ENCODE measurements at regions of chr13 and their contacts with region 1.

Region 1: DNA sequence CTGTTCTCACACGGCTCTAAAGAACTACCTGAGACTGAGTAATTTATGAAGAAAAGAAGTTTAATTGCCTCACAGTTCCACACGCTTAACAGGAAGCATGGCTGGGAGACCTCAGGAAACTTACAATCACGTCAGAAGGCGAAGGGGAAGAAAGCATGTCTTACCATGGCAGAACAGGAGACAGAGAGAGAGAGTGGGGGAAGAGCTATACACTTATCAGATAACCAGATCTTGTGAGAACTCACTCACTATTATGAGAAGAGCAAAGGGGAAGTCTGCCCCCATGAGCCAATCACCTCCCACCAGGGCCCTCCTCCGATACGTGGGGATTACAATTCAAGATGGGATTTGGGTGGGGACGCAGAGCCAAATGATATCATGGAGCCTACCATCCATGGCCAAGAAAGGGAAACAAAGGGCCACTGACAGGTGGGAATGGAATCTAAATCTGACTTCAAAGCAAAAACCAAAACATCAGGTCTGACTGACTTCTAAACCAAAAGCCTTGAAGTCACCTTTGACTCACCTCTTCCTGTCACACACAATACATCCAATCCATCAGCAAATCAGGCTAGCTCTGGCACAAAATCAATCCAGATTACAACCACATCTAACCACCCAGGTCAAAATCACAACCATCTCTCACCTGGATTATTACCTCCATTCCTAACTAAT is 189.7 kb downstream of the ENOX1 start:
- DNase-seq: peak; percentile 20
- ATAC-seq: peak; percentile 90
- H3K4me3 Mint-ChIP-seq: no peak overlapping the region
- H3K27ac Mint-ChIP-seq: peak overlapping the region; percentile 65
- H3K4me1 Mint-ChIP-seq: peaks cover 18% of the 10 kb centered on the region
- H3K27me3 Mint-ChIP-seq: peaks cover 4% of the 10 kb centered on the region

Region 2: DNA sequence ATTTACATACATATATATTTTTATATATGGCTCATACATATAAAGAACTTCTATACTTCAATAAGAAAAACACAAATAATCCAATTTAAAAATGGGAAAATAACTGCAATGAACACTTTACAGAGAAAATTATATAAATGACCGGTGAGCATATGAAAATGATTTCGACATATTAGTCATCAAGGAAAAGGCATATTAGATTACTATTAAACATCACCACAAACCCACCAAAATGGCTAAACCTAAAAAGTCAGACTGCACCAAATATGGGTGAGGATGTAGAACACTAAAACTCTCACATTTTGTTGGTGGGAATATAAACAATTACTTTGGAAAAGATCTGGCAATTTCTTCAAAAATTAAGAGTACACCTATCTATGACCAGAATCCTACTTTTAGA is 126.5 kb before region 1 on chr13:
- CTCF ChIA-PET with region 1: no interaction called
- POLR2A ChIA-PET with region 1: no interaction called
- intact Hi-C with region 1: no loop called
- DNase-seq: no peak
- ATAC-seq: no peak
- H3K4me3 Mint-ChIP-seq: no peak overlapping the region
- H3K27ac Mint-ChIP-seq: no peak overlapping the region
- H3K4me1 Mint-ChIP-seq: no peaks in the 10 kb centered on the region
- H3K27me3 Mint-ChIP-seq: peaks cover 9% of the 10 kb centered on the region

Region 3: GRCh38 chr13:43694146-43694664 is 97.1 kb after region 1 on chr13:
- CTCF ChIA-PET with region 1: interaction called, 3 read pairs
- POLR2A ChIA-PET with region 1: no interaction called
- intact Hi-C with region 1: loop called in 1 of 2 experiments (anchors 5 kb)
- DNase-seq: no peak
- ATAC-seq: peak; percentile 16
- H3K4me3 Mint-ChIP-seq: no peak overlapping the region
- H3K27ac Mint-ChIP-seq: no peak overlapping the region
- H3K4me1 Mint-ChIP-seq: peaks cover 4% of the 10 kb centered on the region
- H3K27me3 Mint-ChIP-seq: peaks cover 21% of the 10 kb centered on the region

Region 4: DNA sequence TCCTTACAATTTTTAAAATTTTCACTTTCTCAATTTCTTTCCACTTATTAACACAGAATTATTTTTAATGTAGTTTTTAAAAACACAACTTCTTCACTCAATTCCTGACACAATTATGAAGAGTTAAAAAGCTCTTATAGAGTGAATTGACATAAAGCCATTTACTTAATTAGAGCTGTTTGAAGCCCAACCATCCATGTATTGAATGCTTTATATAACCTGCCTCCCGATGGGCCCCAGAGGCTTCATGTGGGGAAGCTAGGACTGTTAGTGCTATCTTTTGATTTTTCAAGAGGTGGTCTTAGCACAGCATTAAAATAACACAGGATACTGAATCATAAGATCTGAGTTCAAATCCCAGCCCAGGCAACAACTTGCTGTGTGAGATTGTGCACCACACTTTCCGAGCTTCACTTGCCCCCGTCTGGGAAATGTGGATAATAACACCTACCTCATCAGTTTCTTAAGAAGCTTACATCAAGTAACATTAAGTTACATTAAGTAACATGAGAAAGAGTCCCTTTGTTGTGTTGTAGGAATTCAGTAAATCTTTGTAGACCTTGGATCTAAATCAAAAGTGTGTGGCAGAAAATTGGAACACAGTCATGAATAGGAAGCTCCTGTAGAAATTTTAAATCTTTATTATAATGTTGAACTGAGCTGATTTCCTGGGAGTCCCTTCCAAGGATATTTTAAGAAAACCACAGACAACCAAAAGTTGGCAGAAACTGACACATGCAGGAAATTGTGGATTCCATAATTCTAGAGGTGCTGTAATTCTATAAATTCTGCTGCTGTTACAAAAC is 195.2 kb after region 1 on chr13:
- CTCF ChIA-PET with region 1: no interaction called
- POLR2A ChIA-PET with region 1: no interaction called
- intact Hi-C with region 1: loop called (anchors 5 to 10 kb)
- DNase-seq: no peak
- ATAC-seq: no peak
- H3K4me3 Mint-ChIP-seq: no peak overlapping the region
- H3K27ac Mint-ChIP-seq: no peak overlapping the region
- H3K4me1 Mint-ChIP-seq: peaks cover 22% of the 10 kb centered on the region
- H3K27me3 Mint-ChIP-seq: peaks cover 49% of the 10 kb centered on the region

Region 5: DNA sequence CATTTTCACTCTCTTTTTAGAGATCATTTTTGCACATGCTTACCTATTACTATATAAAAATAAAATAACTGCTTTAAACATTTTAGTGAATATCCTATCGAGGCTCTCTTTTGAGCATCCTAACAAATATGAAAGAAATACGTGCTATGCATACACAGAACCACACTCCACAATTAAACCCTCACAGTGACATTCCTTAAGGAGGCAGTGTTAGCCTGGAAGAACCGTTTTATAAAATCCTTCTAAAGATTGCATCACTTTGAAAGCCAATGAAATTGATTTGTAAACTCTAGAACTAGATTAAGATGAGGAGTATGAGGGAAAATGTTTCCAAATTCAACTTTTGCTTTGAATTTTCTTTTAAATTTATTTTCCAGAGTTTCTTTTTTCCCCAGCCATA is 200.8 kb after region 1 on chr13:
- CTCF ChIA-PET with region 1: no interaction called
- POLR2A ChIA-PET with region 1: no interaction called
- intact Hi-C with region 1: loop called (anchors 5 to 10 kb)
- DNase-seq: no peak
- ATAC-seq: no peak
- H3K4me3 Mint-ChIP-seq: no peak overlapping the region
- H3K27ac Mint-ChIP-seq: no peak overlapping the region
- H3K4me1 Mint-ChIP-seq: peaks cover 34% of the 10 kb centered on the region
- H3K27me3 Mint-ChIP-seq: peaks cover 31% of the 10 kb centered on the region

Measured in activated CD4-positive, alpha-beta T cell treated with anti-CD3 and anti-CD28 coated beads for 36 hours (primary cell).